ENCODE measurements at regions of chr13 and their contacts with region 1.

Region 1: DNA sequence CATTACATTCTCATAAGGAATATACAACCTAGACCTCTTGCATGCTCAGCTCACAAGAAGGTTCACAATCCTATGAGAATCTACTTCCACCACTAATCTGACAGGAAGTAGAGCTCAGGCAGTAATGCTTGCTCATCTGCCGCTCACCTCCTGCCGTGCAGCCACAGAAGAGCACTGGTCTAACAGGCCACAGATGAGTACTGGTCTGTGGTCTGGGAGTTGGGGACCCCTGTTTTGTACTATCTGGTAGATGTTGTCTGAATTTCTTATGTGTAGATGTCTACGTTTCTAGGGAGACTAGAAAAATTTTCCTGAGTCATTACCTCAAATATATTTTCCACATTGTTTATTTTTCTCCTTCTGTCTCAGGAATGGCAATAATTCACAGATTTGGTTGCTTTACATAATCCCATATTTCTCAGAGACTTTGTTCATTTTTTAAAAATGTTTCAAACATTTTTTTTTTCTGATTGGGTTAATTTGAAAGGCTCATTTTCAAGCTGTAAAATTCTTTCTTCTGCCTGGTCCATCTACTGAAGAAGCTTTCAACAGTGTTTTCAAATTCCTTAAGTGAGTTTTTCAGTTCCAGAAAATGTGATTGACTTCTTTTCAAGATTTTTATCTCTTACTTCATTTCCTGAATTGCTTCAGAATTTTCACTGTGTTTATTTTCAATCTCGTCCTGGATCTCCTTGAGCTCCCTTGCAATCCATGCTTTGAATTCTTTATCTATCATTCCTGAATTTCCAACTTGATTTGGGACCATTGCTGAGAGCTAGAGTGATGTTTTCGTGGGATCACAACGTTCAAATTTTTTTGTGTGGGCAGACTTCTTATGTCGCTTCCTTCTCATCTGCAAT is 1322.2 kb downstream of the PCDH9 start:
- DNase-seq: no peak
- H3K4me3 ChIP-seq: no peak overlapping the region
- H3K27ac ChIP-seq: no peak overlapping the region
- H3K4me1 ChIP-seq: no peaks in the 10 kb centered on the region
- H3K27me3 ChIP-seq: no peaks in the 10 kb centered on the region
- CTCF ChIP-seq: no peak
- EP300 ChIP-seq: no peak
- POLR2A ChIP-seq: no peak

Region 2: DNA sequence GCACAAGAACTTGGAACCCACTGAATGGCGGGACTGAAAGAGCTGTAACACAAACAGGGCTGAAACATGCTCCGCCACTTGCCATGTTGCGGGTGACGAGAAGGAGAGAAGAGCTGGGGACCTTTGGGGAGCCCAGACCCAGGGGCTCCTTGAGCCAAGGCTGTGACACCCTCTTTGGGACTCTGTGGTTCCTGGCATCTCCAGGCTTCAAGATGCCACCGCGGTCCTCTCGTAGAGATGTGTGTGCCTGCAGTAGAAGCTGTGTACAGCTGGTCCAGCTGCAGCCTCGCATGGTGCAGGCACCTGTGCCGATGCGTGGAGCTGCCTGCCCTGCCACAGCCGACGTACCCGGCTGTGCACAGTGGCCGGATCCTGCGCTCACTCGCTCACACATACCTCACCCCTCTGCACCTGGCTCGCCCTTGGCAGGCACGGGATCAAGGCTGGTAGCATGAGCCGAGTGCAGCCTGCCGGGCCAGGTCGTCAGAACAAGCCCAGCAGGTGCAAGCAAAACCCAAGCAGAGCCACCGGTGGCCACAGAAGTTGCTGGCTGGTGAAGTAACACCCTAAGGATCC is 63.5 kb before region 1 on chr13:
- intact Hi-C with region 1: no loop called
- DNase-seq: no peak
- H3K4me3 ChIP-seq: no peak overlapping the region
- H3K27ac ChIP-seq: no peak overlapping the region
- H3K4me1 ChIP-seq: no peaks in the 10 kb centered on the region
- H3K27me3 ChIP-seq: no peaks in the 10 kb centered on the region
- CTCF ChIP-seq: no peak
- EP300 ChIP-seq: no peak
- POLR2A ChIP-seq: no peak

Region 3: GRCh38 chr13:65889368-65889767 is 18.5 kb before region 1 on chr13:
- intact Hi-C with region 1: loop called in 1 of 4 experiments (anchors 1 kb)
- DNase-seq: no peak
- H3K4me3 ChIP-seq: no peak overlapping the region
- H3K27ac ChIP-seq: no peak overlapping the region
- H3K4me1 ChIP-seq: no peaks in the 10 kb centered on the region
- H3K27me3 ChIP-seq: no peaks in the 10 kb centered on the region
- CTCF ChIP-seq: no peak
- EP300 ChIP-seq: no peak
- POLR2A ChIP-seq: no peak

Region 4: GRCh38 chr13:67023130-67023879 is 1115.4 kb after region 1 on chr13:
- intact Hi-C with region 1: no loop called
- DNase-seq: no peak
- H3K4me3 ChIP-seq: no peak overlapping the region
- H3K27ac ChIP-seq: no peak overlapping the region
- H3K4me1 ChIP-seq: no peaks in the 10 kb centered on the region
- H3K27me3 ChIP-seq: no peaks in the 10 kb centered on the region
- CTCF ChIP-seq: no peak
- EP300 ChIP-seq: no peak
- POLR2A ChIP-seq: no peak

Measured in ovary (tissue), 10 donors.